ENCODE measurements at regions of chr9 and their contacts with region 1.

Region 1: DNA sequence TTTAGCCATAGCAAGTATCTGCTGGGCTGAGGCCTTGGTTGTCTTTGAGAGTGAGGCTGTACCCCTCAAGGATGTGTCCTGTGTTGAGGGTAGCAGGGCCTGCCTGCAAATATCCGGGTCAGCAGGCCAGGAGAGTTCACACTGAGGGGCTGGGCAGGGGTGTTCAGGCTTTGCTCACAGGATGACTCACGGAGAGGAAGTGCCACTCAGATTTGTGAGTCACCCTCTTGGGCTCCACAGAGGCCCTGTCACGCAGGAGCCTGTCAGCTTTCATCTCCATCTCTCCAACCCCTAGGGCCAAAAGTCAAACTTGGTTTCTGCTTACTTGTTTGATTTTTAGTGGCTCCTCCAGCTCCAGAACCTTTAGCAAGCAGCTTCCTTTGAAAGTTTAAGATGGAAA is 211.5 kb downstream of the SEC61B start:
- DNase-seq: peak; percentile 76 to 88
- H3K4me3 ChIP-seq: no peak overlapping the region
- H3K27ac ChIP-seq: peak overlapping the region; percentile 72
- H3K4me1 ChIP-seq: peaks cover 20% of the 10 kb centered on the region
- H3K27me3 ChIP-seq: no peaks in the 10 kb centered on the region
- CTCF ChIP-seq: no peak

Region 2: GRCh38 chr9:99057665-99058625 is 375.6 kb before region 1 on chr9:
- CTCF ChIA-PET with region 1: no interaction called
- POLR2A ChIA-PET with region 1: interaction called, 12 read pairs
- intact Hi-C with region 1: no loop called
- DNase-seq: no peak
- H3K4me3 ChIP-seq: no peak overlapping the region
- H3K27ac ChIP-seq: peak overlapping the region; percentile 40
- H3K4me1 ChIP-seq: peaks cover 58% of the 10 kb centered on the region
- H3K27me3 ChIP-seq: no peaks in the 10 kb centered on the region
- CTCF ChIP-seq: no peak

Region 3: DNA sequence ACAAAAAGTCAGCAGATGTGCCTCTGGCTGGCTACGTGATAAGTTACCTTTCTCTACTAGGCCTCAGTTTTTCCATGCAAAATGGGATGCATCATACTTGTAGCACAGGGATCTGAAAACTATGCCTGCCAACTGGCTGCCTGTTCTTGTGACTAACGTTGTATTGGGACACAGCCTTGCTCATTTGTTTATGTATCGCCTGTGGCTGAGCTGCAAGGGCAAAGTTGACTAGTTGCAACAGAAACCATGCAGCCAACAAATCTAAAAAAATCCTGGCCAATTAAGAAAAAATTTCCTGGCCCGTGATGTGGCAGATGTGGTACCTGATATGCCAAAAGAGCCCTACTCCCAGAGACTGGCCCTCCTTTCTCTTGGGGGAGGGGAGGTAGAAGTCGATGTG is 80.1 kb before region 1 on chr9:
- CTCF ChIA-PET with region 1: no interaction called
- POLR2A ChIA-PET with region 1: no interaction called
- intact Hi-C with region 1: no loop called
- DNase-seq: peak in 1 of 2 experiments; percentile 59
- H3K4me3 ChIP-seq: no peak overlapping the region
- H3K27ac ChIP-seq: no peak overlapping the region
- H3K4me1 ChIP-seq: peaks cover 7% of the 10 kb centered on the region; the same call in 1 of the 2 replicates
- H3K27me3 ChIP-seq: no peaks in the 10 kb centered on the region
- CTCF ChIP-seq: no peak